ENCODE measurements at regions of chr10 and their contacts with region 1.

Region 1: GRCh38 chr10:21372651-21373410 is 152.7 kb downstream of the SKIDA1 start:
- DNase-seq: peak; percentile 41 to 77 (median 69)
- H3K4me3 ChIP-seq: peak overlapping the region in 2 of 4 donors; percentile 13 to 33
- H3K27ac ChIP-seq: peak overlapping the region in 2 of 5 donors; percentile 60 to 72
- H3K4me1 ChIP-seq: peaks cover 17 to 29% of the 10 kb centered on the region in 2 donors
- H3K27me3 ChIP-seq: no peaks in the 10 kb centered on the region
- CTCF ChIP-seq: no peak
- POLR2A ChIP-seq: peak in 1 of 2 donors; percentile 57

Region 2: GRCh38 chr10:21285742-21286331 is 87.0 kb before region 1 on chr10:
- intact Hi-C with region 1: loop called in 1 of 2 experiments (anchors 10 kb)
- DNase-seq: peak in 4 of 7 donors; percentile 28 to 61 (median 42)
- H3K4me3 ChIP-seq: no peak overlapping the region
- H3K27ac ChIP-seq: peak overlapping the region in 3 of 5 donors; percentile 19 to 61 (median 39)
- H3K4me1 ChIP-seq: peaks cover 0 to 7% of the 10 kb centered on the region in 2 donors
- H3K27me3 ChIP-seq: no peaks in the 10 kb centered on the region
- CTCF ChIP-seq: no peak
- POLR2A ChIP-seq: no peak

Region 3: DNA sequence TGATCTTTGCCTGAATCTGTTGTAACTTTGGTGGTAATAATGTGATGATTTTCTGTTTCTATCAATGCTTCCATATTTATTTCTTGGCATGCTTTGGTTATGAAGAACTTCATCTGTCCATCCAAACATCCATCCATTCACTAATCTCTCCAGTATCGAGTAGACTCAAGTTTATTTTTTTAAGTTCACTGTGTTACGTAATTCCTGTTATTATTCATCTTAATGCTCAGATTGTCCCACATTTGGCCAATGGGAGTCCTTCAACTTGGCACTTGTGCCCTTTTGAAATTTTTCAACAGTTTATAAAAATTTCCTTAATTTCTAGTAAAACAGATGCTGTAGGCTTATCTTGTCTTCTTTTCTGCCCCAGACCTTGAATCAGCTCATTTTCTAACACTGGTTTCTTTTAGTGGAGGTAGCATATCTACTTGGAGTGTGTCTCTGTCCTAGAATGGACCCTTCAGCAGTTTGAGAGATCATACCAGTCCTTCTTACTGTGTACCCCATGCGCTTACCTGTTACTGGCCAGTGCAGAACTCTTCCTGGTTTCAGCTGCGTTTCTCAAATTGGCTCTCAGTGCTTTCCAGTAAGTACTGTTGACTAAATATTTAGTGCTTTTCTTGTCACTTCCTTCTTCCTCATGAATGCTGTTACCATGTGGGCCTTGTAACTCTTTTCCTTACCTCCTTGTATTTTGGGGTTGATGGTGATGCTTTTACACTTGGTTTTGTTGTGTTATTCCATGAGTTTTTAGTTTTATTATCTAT is 262.0 kb after region 1 on chr10:
- intact Hi-C with region 1: no loop called
- DNase-seq: no peak
- H3K4me3 ChIP-seq: no peak overlapping the region
- H3K27ac ChIP-seq: no peak overlapping the region
- H3K4me1 ChIP-seq: peaks cover 9 to 12% of the 10 kb centered on the region in 2 donors
- H3K27me3 ChIP-seq: no peaks in the 10 kb centered on the region
- CTCF ChIP-seq: no peak
- POLR2A ChIP-seq: no peak

Measured in adrenal gland (tissue), 19 donors.